ENCODE measurements at regions of chr18 and their contacts with region 1.

Region 1: DNA sequence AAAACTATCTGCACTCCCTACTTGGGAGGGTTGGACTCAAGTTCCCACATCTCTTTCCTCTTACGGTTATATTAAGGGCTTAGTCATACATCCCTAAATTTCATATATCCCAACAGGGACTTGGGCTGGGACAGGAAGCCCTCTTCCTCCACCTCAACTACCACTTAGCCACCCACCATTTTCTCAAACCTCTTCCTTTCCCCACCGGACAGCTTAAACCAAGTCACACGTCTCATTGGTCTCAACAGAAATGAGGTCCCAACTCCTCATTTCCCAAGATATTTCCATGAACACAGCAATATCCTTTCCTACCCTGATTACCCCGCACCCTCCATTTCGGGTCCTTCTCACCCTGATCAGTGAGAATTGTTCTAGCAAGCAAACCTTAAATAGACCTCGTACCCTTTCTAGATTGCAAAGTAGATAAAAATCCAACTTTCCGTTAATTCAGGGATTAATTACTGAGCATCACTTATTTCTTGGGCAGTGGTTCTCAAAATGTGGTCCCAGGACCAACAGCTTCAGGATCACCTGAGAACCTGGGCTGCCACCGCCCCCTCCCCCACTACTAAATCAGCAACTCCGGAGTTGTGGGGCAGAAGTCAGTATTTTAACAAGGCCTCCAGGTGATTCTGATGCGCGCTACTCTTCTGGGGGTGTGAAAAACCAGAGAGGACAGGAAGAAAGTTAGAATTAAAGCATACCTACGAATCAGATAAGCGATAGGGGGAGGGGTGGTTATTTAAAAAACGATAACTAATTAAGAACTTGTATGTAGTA is 546 bp downstream of the ZSCAN30 start:
- DNase-seq: no peak
- ATAC-seq: peak; percentile 77

Region 2: GRCh38 chr18:35244671-35245070 is 44.8 kb before region 1 on chr18:
- intact Hi-C with region 1: loop called (anchors 2 kb)
- DNase-seq: no peak
- ATAC-seq: no peak

Region 3: GRCh38 chr18:35334821-35335220 is 45.3 kb after region 1 on chr18:
- intact Hi-C with region 1: no loop called
- DNase-seq: no peak
- ATAC-seq: no peak